ENCODE measurements at regions of chr2 and their contacts with region 1.

Region 1: DNA sequence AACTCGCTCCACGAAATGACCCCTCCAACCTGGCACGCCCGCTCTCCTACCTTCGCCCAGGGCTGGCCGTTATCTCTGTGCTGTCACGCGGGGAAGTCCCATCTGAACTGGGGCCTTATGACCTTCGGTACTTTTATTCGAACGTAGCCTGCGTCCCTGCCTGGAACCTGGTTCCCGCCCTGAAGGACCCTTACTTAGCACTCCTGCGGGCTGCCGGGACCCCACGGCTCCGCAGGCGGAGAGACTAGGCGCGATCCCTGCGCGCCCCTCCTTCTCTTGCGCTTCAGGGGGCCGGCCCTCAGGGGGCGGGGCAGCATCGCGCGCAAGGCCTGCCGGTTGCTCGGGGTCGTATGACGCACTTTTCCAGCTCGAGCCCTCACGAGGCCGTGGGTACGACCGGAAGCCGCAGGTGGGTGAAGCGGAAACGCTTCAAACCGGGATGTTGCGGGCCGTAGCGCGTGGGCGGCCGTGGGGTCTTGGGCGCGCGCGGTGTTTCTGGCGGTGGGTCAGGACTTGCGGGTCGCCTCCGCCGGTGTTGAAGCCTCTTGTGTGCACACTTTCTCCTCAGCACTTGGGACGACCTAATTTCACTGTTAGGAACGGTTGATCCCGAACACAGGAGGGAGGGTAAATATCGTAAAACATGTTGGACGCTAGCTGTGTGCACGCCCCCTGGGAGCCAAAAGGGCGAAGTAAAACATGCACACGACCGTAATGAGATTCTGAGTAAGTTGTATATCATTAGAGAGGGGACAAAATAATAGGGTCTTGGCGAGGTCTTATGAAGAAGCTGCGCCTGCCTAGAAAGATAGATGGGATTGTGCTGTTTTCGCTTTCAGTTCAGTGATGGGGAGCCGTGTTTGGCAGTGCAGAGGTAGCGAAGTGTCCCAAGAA is at the starts of genes LIPT1 and TSGA10:
- DNase-seq: peak; percentile 90 to 95 (median 92)
- H3K4me3 ChIP-seq: peak within 1 kb of the TSS; percentile 96
- H3K4me3 Mint-ChIP-seq: peak within 1 kb of the TSS in 4 of 7 donors; percentile 84 to 92 (median 89)
- H3K27ac ChIP-seq: peak within 1 kb of the TSS; percentile 97
- H3K27ac Mint-ChIP-seq: peak within 1 kb of the TSS in 3 of 8 donors; percentile 88 to 99 (median 97)
- H3K4me1 ChIP-seq: peaks cover 25% of the 10 kb centered on the region
- H3K4me1 Mint-ChIP-seq: peaks cover 37 to 47% (median 41%) of the 10 kb centered on the region in 3 donors
- H3K27me3 ChIP-seq: no peaks in the 10 kb centered on the region
- H3K27me3 Mint-ChIP-seq: no peaks in the 10 kb centered on the region
- total RNA-seq, gene LIPT1: 4.9 to 5.5 TPM
- total RNA-seq, gene TSGA10: 6.4 to 6.7 TPM

Region 2: DNA sequence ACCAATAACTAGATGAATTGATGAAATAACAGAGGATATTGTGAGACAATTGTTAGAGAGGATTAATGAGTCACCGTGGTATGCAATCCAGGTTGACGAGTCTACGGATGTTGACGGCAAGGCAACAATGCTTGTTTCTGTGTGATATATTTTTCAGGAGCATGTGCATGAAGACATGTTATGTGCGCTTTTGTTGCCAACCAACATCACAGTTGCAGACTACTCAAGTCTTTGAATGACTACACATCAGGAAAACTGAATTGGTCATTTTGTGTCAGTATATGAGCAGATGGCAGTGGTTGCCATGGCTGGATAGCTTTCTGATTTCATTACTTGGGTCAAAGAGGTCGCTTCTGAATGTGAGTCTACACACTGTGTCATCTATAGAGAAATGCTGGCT is 122.1 kb before region 1 on chr2:
- CTCF ChIA-PET with region 1: no interaction called
- POLR2A ChIA-PET with region 1: no interaction called
- DNase-seq: no peak
- H3K4me3 ChIP-seq: no peak overlapping the region
- H3K4me3 Mint-ChIP-seq: no peak overlapping the region
- H3K27ac ChIP-seq: no peak overlapping the region
- H3K27ac Mint-ChIP-seq: no peak overlapping the region
- H3K4me1 ChIP-seq: no peaks in the 10 kb centered on the region
- H3K4me1 Mint-ChIP-seq: peaks cover 0 to 8% (median 7%) of the 10 kb centered on the region in 3 donors
- H3K27me3 ChIP-seq: no peaks in the 10 kb centered on the region
- H3K27me3 Mint-ChIP-seq: peaks cover 3 to 24% of the 10 kb centered on the region in 2 donors

Region 3: DNA sequence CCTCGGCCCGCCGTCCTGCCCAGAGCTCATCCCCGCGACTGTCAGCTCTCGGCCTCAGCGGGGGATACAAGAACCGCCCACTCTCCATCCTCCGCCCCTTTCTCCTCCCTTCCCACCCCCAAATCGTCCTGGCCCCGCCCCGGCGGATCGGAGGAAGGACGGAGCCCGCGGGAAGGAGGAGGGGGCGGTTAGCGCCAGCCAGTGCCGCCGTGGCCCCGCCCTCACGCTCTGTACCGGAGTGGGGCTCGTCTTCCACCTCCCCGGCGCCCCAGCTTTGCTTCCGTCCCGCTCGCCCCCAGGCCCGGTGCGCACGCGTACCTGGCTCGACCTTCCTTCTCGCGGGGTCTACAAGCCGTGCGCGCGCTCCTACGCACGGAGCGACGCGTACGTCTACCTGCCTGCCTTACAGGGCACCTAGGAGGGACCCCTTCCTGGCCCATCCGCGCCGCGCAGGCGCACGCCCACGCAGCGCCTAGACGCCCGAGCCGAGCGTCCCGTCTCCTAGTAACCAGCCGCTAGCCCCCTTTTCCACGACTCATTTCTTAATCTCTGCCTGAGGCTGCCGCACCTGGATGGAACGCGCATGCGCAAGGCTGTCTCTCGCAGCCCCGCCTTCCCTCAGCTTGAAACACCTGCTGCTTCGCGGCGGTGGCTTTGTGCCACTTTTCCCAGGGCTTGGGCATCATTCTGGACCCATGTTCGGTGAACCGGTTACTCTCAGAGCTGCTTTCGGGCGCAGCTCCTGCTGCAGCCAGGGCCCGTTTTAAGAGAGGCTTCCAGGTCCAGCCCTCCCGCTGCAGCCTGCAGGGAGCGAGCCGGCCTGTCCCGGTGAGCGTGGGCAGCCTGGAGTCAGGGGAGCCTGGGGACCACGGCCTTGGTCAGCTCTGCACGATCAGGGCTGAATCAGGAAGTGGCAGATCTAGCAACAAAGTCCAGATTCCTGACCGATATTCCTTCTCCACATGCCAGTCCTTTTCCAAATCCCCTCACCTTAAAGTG is 13.5 kb before region 1 on chr2 and contains the start of gene C2orf15:
- CTCF ChIA-PET with region 1: interaction called, 4 read pairs
- POLR2A ChIA-PET with region 1: interaction called, 40 read pairs
- DNase-seq: peak; percentile 96 to 98 (median 97)
- H3K4me3 ChIP-seq: peak within 1 kb of the TSS; percentile 100
- H3K4me3 Mint-ChIP-seq: peak within 1 kb of the TSS; percentile 92 to 99 (median 96)
- H3K27ac ChIP-seq: peak within 1 kb of the TSS; percentile 90
- H3K27ac Mint-ChIP-seq: peak within 1 kb of the TSS; percentile 83 to 99 (median 98)
- H3K4me1 ChIP-seq: peaks cover 14% of the 10 kb centered on the region
- H3K4me1 Mint-ChIP-seq: peaks cover 19 to 28% (median 24%) of the 10 kb centered on the region in 3 donors
- H3K27me3 ChIP-seq: no peaks in the 10 kb centered on the region
- H3K27me3 Mint-ChIP-seq: no peaks in the 10 kb centered on the region
- total RNA-seq, gene C2orf15: 0.86 to 0.92 TPM

Region 4: GRCh38 chr2:99180755-99181623 is 26.1 kb after region 1 on chr2 and contains the starts of genes MITD1 and MRPL30:
- CTCF ChIA-PET with region 1: interaction called, 3 read pairs
- POLR2A ChIA-PET with region 1: interaction called, 11 read pairs
- DNase-seq: peak; percentile 85 to 93 (median 89)
- H3K4me3 ChIP-seq: peak within 1 kb of the TSS; percentile 99
- H3K4me3 Mint-ChIP-seq: peak within 1 kb of the TSS; percentile 94 to 100 (median 99)
- H3K27ac ChIP-seq: peak within 1 kb of the TSS; percentile 90
- H3K27ac Mint-ChIP-seq: peak within 1 kb of the TSS; percentile 89 to 100 (median 100)
- H3K4me1 ChIP-seq: peaks cover 52% of the 10 kb centered on the region
- H3K4me1 Mint-ChIP-seq: peaks cover 44 to 86% (median 75%) of the 10 kb centered on the region in 3 donors
- H3K27me3 ChIP-seq: no peaks in the 10 kb centered on the region
- H3K27me3 Mint-ChIP-seq: no peaks in the 10 kb centered on the region
- total RNA-seq, gene MITD1: 55.4 to 58.7 TPM
- total RNA-seq, gene MRPL30: 28.8 to 29.8 TPM

Region 5: GRCh38 chr2:99337113-99338028 is 182.5 kb after region 1 on chr2 and contains the start of gene EIF5B:
- CTCF ChIA-PET with region 1: no interaction called
- POLR2A ChIA-PET with region 1: interaction called, 10 read pairs
- DNase-seq: peak; percentile 83 to 93 (median 87)
- H3K4me3 ChIP-seq: peak within 1 kb of the TSS; percentile 79
- H3K4me3 Mint-ChIP-seq: no peak within 1 kb of the TSS
- H3K27ac ChIP-seq: peak within 1 kb of the TSS; percentile 83
- H3K27ac Mint-ChIP-seq: no peak within 1 kb of the TSS
- H3K4me1 ChIP-seq: peaks cover 37% of the 10 kb centered on the region
- H3K4me1 Mint-ChIP-seq: peaks cover 27 to 49% (median 36%) of the 10 kb centered on the region in 3 donors
- H3K27me3 ChIP-seq: no peaks in the 10 kb centered on the region
- H3K27me3 Mint-ChIP-seq: no peaks in the 10 kb centered on the region
- total RNA-seq, gene EIF5B: 82.8 to 96.2 TPM

Measured in CD8-positive, alpha-beta memory T cell (primary cell).